ENCODE measurements at regions of chr1 and their contacts with region 1.

Region 1: DNA sequence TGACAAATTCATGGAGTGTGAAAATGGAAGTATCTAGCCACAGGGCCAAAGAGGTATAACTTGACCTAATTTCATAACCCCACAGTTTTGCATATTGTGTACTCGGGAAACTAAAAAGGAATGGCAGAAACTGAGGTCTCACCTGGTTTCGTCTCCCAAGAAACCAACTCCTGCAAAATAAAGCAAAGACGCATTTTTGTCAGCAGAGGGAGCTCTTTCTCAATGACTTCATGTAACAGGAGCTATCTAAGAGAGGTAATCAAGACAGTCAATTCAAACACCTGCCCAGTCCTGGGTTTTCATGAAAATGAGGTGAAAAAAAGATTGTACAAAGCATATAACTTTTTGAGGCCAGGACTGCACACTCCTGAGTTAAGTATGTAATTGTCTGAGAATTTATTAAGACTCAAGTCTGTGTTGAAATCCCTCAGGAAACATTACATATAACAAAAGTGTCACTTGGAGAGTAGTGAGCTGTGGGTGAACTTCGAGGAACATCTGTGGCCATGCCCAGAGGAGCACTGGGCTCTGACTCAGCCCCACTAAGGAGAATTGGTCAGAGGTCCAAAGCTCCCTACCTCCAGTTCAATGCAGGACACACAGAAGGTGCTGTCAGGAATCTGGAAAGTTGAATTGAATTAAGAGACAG is 17.6 kb downstream of the FCRL4 start:
- DNase-seq: peak; percentile 27
- H3K4me3 Mint-ChIP-seq: no peak overlapping the region
- H3K27ac Mint-ChIP-seq: no peak overlapping the region
- H3K4me1 Mint-ChIP-seq: no peaks in the 10 kb centered on the region
- H3K27me3 Mint-ChIP-seq: peaks cover 27% of the 10 kb centered on the region

Region 2: GRCh38 chr1:157566484-157567300 is 13.6 kb before region 1 on chr1:
- CTCF ChIA-PET with region 1: interaction called, 10 read pairs
- DNase-seq: no peak
- H3K4me3 Mint-ChIP-seq: no peak overlapping the region
- H3K27ac Mint-ChIP-seq: no peak overlapping the region
- H3K4me1 Mint-ChIP-seq: no peaks in the 10 kb centered on the region
- H3K27me3 Mint-ChIP-seq: peaks cover 11% of the 10 kb centered on the region

Region 3: DNA sequence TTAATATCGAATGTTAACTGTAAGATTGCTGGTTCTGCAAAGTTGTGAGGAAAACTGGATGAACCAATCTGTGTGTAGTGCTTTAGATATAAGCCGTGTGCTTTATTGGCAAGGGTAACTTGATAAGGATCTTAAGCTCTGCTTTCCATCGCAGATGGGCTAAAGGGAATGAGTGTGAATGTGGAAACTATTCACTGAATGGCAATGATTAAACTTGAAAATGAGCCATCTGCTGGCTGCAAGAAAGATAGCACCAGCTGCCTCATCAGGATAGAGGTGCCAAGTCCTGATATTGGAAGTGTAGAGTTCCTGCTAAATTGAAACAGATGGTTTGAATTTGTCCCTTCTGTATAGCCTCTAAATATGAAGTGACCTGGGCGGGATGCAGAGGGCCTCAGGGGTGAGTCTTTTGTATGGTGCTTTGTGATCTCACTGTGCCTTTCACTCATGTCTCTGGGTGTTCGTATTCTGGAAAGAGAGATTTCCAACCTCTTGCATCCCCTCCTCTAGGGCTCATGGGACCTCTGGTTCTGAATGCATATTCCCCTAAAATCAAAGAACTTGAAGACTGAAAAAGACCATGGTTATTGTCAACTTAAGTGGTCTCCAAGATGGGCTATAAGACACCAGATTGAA is 111.1 kb after region 1 on chr1:
- CTCF ChIA-PET with region 1: interaction called, 14 read pairs
- DNase-seq: no peak
- H3K4me3 Mint-ChIP-seq: no peak overlapping the region
- H3K27ac Mint-ChIP-seq: no peak overlapping the region
- H3K4me1 Mint-ChIP-seq: no peaks in the 10 kb centered on the region
- H3K27me3 Mint-ChIP-seq: no peaks in the 10 kb centered on the region

Measured in activated naive CD4-positive, alpha-beta T cell treated with anti-CD3 and anti-CD28 coated beads, Interleukin-2, amount 10 ng/mL, durations not matched to agents 7 days and 5 days (primary cell).